ENCODE measurements at regions of chr3 and their contacts with region 1.

Region 1: DNA sequence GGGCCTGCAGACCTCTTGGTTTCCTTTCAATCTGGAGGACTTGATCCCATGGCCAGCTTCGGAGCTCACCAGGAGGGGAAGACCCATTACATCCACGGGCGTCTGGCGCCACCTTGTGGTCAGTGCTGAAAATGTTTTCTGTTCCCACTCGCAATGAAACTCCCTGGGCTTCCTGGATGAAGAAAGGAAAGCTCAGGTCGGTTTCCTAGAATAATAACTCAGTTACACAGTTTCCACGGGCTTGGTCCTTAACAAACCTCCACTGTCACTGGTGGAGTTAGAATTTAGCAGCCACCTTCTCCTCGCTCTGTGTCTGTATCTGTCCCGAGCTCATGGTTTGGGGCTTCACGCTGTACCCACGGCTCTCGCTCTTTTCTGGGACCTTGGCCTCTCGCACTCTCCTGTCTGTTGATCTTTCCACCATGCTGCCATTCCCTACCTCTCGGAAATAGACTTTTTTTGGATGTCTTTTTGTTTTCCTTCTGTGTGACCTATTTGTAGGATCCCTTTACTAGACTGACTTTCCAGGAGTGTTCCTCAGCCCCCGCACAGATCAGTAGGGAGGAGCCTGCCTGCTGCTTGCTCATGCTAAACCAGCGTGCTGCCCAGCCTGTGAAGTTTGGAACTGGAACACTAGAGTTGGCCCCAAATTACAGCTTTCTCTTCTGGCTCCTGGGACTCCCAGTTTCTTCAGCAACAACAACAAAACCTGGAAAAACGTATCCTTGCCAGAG is 56.3 kb downstream of the IL20RB start:
- DNase-seq: peak; percentile 74
- H3K4me3 ChIP-seq: peak overlapping the region; percentile 56
- H3K27ac ChIP-seq: no peak overlapping the region
- H3K27me3 ChIP-seq: no peaks in the 10 kb centered on the region
- CTCF ChIP-seq: peak; percentile 79

Region 2: DNA sequence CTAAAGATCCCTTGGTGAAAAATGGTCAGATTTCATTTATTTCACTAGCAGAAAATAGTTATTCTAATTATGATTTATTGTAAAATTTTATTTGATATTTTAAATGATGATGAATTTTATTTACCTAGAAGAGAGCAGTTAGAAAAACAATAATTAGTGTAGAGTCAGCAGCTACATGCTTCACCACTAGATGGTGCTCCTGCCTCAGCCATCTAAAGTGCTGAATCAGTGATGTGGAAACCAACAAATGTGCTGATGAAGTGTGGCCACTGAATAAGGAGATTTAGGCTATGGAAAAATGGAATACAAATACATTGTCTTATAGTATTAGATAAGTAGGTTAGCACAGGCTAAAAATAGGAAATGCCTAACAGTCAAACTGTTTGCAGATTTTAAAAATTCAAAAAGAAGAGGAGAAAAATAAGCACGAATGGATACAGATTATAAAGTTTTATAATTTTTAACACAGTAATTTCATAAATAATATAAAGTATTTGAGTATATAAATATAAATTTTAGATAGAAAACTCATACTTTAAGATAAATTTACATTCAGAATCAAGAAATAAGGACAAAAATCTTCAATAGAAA is 938.8 kb before region 1 on chr3:
- CTCF ChIA-PET with region 1: interaction called, 23 read pairs
- POLR2A ChIA-PET with region 1: no interaction called
- DNase-seq: peak; percentile 62
- H3K4me3 ChIP-seq: no peak overlapping the region
- H3K27ac ChIP-seq: no peak overlapping the region
- H3K27me3 ChIP-seq: no peaks in the 10 kb centered on the region
- CTCF ChIP-seq: peak; percentile 91

Region 3: GRCh38 chr3:136390574-136390973 is 623.5 kb before region 1 on chr3:
- CTCF ChIA-PET with region 1: interaction called, 17 read pairs
- POLR2A ChIA-PET with region 1: interaction called, 3 read pairs
- DNase-seq: no peak
- H3K4me3 ChIP-seq: no peak overlapping the region
- H3K27ac ChIP-seq: no peak overlapping the region
- H3K27me3 ChIP-seq: no peaks in the 10 kb centered on the region
- CTCF ChIP-seq: no peak

Region 4: GRCh38 chr3:136678981-136679380 is 335.1 kb before region 1 on chr3:
- CTCF ChIA-PET with region 1: no interaction called
- POLR2A ChIA-PET with region 1: no interaction called
- DNase-seq: no peak
- H3K4me3 ChIP-seq: no peak overlapping the region
- H3K27ac ChIP-seq: no peak overlapping the region
- H3K27me3 ChIP-seq: no peaks in the 10 kb centered on the region
- CTCF ChIP-seq: no peak

Region 5: DNA sequence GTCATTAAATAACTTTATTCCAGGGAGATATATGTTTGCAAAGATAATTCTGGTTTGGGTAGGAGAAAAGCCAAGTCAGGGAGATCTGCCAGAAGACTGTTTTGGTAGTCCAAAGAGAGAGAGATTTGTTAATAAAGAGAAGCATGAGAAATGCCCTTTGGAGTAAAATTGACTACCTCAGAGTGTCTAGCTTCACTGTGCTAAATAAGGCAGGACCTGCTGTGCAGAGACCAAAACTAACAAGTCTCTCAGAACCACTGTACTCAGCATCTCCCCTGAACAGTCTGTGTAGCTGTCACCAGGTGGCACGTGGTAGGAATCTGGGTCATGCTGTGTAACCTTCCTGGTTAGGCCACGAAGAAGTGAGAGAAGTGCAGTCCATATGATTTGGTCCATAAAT is 226.8 kb before region 1 on chr3:
- CTCF ChIA-PET with region 1: interaction called, 17 read pairs
- POLR2A ChIA-PET with region 1: interaction called, 8 read pairs
- DNase-seq: no peak
- H3K4me3 ChIP-seq: no peak overlapping the region; the same call in 1 of the 2 replicates
- H3K27ac ChIP-seq: peak overlapping the region; percentile 93
- H3K27me3 ChIP-seq: no peaks in the 10 kb centered on the region
- CTCF ChIP-seq: no peak

Region 6: DNA sequence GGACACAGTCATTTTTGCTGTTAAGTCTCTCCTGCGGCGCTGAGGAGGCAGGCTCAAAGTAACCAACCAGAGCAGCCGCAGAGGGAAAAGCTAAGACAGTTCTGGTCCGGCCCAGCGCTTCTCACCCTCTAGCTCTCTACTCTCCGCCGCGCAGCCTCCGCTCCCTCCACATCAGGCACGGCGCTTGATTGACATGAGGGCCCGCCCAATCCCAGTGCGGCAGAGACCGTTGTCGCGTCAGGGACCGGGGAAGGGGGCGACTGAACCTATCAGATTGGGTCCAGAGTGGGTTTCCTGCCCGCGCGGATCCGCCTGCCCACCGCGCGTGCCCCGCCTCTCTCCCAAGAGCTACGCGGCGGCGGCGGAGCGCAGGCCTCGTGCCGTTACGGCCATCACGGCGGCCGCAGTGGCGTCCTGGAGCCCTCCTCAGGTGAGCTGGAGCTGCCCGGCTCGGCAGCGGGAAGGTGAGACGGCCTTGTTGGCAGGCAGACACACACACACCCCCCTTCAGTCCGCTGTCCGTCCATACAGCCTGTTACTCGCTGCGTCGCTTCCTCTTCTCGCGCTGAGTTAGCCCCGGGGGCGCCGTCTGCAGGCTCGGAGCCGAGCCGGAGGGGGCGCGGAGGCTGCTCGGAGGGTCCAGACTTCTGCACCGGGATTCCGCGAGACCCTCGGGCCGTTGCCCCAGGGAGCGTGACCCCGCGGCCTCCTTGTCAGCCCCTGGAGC is 152.1 kb before region 1 on chr3 and contains the start of gene NCK1:
- CTCF ChIA-PET with region 1: interaction called, 29 read pairs
- POLR2A ChIA-PET with region 1: interaction called, 8 read pairs
- DNase-seq: peak; percentile 94
- H3K4me3 ChIP-seq: peak within 1 kb of the TSS; percentile 91
- H3K27ac ChIP-seq: peak within 1 kb of the TSS; percentile 87
- H3K27me3 ChIP-seq: no peaks in the 10 kb centered on the region
- CTCF ChIP-seq: no peak
- polyA plus RNA-seq, gene NCK1: 44.0 and 67.7 TPM in 2 replicates

Region 7: DNA sequence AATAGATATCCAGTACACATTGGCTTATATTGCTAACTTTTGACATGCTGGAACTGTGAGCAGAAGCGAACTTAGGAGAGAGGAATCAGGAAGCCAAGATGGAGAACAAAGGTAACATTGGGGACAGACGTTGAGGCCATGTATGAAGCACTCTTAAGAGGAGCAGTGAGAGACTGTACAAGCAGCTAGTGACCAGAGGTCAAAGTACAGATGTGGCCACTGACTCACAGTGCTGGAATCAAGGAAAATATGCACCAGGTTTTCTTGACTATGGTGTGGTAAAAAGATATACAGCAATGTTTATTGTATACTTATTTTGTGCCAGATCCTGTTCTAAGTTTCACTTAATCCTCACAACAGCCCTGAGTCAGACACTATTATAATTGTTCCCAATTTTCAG is 58.3 kb before region 1 on chr3:
- CTCF ChIA-PET with region 1: interaction called, 21 read pairs
- POLR2A ChIA-PET with region 1: no interaction called
- DNase-seq: peak; percentile 81
- H3K4me3 ChIP-seq: no peak overlapping the region
- H3K27ac ChIP-seq: peak overlapping the region; percentile 68
- H3K27me3 ChIP-seq: no peaks in the 10 kb centered on the region
- CTCF ChIP-seq: no peak